Aorta (tissue), 5 donors: ENCODE measurements at regions of chr2 and their contacts with region 1.

Region 1: DNA sequence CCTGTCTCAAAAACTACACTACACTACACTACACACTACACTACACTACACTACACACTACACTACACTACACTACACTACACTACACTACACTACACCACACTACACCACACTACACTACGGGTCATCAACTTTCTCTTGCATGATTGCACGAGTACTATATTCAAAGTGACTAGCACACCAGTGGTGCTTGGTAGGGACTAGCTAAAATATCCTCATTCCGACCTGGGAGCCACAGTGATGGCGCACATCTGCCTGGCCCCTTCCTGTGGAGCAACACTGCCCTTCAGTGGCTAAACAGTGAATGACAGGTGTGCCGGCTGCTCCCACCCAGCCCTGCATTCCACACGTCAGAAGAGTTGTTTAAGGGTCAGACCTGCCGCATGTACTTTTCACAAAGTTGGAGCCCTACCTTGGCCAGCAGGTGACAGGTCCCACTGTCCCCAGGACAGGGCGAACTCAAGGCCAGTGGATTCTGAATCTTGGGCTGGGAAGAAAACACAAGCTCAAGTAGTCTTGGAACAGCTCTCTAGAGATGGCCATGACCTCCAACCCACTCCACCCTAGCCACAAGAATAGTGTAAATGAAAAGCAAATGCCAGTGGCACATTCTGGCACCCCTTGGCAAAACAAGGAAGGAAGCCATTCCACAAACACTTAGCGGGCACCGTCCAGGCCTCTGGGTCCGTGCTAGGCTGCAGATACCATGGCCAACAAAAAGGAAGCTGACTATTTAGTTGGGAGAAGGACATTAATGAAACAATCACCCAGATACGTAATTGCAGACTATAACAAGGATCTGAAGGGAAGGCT is 79.7 kb upstream of the MSH2 start:
- DNase-seq: peak; percentile 81 to 91
- ATAC-seq: peak; percentile 93
- H3K4me3 ChIP-seq: no peak overlapping the region
- H3K27ac ChIP-seq: no peak overlapping the region
- H3K4me1 ChIP-seq: no peaks in the 10 kb centered on the region
- H3K27me3 ChIP-seq: no peaks in the 10 kb centered on the region

Region 2: GRCh38 chr2:46650556-46651001 is 672.6 kb before region 1 on chr2:
- intact Hi-C with region 1: loop called in 1 of 2 experiments (anchors 10 kb)
- DNase-seq: peak in 1 of 2 donors; percentile 72
- ATAC-seq: no peak
- H3K4me3 ChIP-seq: no peak overlapping the region
- H3K27ac ChIP-seq: no peak overlapping the region
- H3K4me1 ChIP-seq: no peaks in the 10 kb centered on the region
- H3K27me3 ChIP-seq: no peaks in the 10 kb centered on the region

Region 3: DNA sequence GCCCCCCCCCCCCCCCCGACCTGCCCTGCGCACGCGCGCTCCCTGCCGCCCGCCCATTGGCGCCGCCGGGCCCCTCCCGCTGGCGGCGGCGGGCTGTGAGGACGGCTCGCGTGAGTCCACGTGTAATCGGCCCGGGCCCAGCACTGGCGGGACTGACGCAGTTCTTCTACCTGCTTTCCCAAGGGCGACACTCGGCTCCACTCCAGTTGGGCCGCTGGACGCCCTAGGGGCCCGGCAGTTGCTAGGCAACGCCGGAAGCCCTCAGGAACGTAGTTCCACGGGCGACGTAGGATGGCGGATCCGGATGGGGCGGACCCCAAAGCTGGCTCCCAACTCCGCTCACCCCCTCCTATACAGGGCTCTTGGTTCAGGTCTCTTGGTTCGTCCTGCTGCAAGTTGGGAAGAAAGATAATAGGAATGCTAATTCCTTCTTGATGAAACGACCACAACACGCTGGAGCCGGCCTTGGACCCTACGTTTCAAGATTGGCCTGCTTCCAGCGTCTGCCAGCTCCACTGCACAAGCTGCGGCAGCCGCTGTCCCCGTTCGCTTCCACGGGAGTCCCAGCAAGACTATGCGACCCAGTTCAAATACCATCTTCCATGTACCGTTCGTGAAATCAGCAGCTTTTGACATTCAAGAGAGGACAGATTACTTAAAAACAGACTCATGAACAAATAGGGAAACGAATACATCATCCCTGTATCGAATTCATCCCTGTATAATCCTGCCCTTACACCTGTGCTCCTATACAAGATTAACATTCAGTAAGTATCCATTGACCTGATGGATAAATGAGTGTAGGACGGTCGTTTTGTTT is 407.2 kb before region 1 on chr2:
- intact Hi-C with region 1: loop called in 1 of 2 experiments (anchors 5 kb)
- DNase-seq: peak; percentile 94 to 97
- ATAC-seq: peak; percentile 95
- H3K4me3 ChIP-seq: peak overlapping the region; percentile 71 to 78
- H3K27ac ChIP-seq: peak overlapping the region; percentile 7 to 84
- H3K4me1 ChIP-seq: peaks cover 0 to 8% of the 10 kb centered on the region in 2 donors
- H3K27me3 ChIP-seq: no peaks in the 10 kb centered on the region

Region 4: GRCh38 chr2:46925545-46926351 is 397.5 kb before region 1 on chr2:
- intact Hi-C with region 1: loop called in 1 of 2 experiments (anchors 5 kb)
- DNase-seq: no peak
- ATAC-seq: no peak
- H3K4me3 ChIP-seq: no peak overlapping the region
- H3K27ac ChIP-seq: no peak overlapping the region
- H3K4me1 ChIP-seq: no peaks in the 10 kb centered on the region
- H3K27me3 ChIP-seq: no peaks in the 10 kb centered on the region

Region 5: GRCh38 chr2:47174733-47175361 is 148.4 kb before region 1 on chr2:
- intact Hi-C with region 1: loop called (anchors 5 kb)
- DNase-seq: peak in 1 of 2 donors; percentile 57
- ATAC-seq: no peak
- H3K4me3 ChIP-seq: peak overlapping the region; percentile 78 to 82
- H3K27ac ChIP-seq: peak overlapping the region; percentile 87 to 99
- H3K4me1 ChIP-seq: peaks cover 4 to 11% of the 10 kb centered on the region in 2 donors
- H3K27me3 ChIP-seq: no peaks in the 10 kb centered on the region